ENCODE measurements at regions of chr10 and their contacts with region 1.

Region 1: DNA sequence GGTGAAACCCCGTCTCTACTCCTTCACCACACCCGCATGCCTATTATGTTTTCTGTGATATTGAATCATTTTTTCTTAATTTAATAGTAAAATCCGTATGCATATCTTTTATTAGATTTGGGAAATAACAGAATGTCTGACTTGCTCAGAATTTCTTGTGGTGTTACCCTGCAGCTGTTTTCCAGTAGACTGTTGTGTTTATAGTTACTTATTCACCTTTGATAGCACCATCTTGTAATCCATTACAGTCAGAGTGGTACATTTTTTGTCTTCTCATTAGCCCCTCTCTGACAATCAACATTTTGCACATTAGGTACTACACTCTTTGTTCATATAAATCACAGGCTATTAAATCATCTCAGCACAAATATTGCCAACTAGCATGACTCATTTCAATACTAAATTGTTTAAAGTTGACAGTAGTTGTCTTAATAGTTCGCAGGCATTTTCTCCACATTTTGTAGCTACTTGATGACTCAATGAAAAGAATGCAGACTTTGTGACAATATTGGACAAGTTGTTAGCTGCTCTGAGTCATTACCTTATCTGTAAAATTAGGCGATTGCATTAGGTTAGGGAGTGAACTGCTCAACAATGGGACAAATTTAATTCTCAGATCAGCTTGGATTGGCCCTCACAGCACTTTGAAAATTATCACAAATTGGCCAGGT is 17.8 kb upstream of the SLC16A12 start:
- DNase-seq: no peak
- ATAC-seq: peak; percentile 66

Region 2: DNA sequence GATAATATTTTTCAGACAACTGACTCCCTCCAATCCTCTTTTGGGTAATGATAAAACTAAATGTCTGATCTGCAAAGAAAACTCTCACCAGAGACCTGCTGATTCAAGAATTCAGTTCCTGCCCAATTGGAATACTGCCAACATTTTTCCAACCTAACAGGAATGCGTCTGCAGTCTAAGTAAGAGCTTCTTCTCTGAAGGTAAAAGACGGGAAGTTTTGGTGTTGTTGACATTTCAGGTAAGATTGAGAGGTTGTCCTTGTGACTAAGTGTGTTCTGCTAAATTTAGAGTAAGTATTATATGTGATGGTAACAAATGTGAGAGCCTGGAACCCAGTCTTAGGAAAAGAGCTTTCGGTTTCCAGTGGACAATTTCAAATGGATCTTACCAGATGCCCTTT is 121.2 kb before region 1 on chr10:
- intact Hi-C with region 1: loop called (anchors 5 kb)
- DNase-seq: no peak
- ATAC-seq: peak; percentile 49

Region 3: DNA sequence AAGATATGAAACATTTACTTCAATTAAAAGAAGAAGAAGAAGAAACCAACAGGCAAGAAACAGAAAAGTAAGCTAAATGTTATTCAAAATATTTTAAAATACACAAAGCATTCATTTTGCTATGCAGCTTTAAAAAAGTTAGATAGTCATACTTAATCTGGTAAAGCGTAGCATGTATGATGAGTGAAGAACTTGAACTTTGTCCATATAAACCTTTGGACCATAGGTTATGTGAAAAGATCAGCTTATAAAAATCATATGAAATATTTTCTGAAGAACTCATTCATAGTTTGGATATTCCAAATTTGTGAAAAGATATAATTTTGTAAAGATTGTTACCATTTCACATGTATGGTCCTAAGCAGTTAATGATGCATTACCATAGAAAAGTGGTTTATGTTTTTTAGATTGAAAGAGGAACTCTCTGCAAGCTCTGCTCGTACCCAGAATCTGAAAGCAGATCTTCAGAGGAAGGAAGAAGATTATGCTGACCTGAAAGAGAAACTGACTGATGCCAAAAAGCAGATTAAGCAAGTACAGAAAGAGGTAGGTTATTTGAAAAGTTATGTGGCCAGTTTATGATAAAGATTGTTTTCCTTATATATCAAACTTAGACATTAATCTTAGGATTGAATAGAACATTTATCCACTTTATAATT is 185.5 kb after region 1 on chr10:
- intact Hi-C with region 1: no loop called
- DNase-seq: no peak
- ATAC-seq: no peak

Measured in left ventricle myocardium superior (tissue), 1 donor.